ENCODE measurements at regions of chr5 and their contacts with region 1.

Region 1: DNA sequence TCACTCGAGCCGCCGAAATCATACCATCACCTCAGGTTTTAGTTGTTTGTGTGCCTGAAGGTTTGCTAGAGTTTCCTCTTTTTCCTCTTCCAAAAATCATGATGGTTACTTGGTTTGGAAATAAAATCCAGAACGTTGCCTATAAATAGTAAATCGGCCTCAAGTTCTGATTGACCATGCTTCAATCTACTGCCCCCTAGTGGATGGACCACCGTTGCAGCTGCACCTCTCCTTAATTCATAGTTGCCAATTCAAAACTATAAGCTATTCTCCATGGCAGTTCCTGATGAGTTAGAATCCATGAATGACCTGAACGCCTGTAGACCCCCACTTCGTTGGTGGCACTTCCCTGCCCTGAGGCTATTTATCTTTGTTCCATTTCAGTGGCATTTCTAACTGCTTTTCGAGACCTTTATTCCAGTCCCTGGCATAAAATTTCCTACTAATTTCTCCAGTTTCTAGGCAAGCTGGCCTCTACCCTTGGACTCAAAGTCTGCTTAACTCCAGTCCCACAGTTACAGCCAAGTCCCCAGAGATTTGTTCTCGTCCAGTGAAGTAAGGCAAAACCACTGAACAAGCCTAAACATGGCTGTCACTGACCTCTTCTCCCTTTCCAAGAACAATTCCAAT is 422.6 kb downstream of the EFNA5 start:
- DNase-seq: peak in 1 of 2 donors; percentile 74
- H3K4me3 ChIP-seq: no peak overlapping the region
- H3K27ac ChIP-seq: no peak overlapping the region
- H3K4me1 ChIP-seq: peaks cover 2 to 6% of the 10 kb centered on the region in 2 donors
- H3K27me3 ChIP-seq: no peaks in the 10 kb centered on the region
- CTCF ChIP-seq: peak; percentile 30 to 64 (median 63)

Region 2: DNA sequence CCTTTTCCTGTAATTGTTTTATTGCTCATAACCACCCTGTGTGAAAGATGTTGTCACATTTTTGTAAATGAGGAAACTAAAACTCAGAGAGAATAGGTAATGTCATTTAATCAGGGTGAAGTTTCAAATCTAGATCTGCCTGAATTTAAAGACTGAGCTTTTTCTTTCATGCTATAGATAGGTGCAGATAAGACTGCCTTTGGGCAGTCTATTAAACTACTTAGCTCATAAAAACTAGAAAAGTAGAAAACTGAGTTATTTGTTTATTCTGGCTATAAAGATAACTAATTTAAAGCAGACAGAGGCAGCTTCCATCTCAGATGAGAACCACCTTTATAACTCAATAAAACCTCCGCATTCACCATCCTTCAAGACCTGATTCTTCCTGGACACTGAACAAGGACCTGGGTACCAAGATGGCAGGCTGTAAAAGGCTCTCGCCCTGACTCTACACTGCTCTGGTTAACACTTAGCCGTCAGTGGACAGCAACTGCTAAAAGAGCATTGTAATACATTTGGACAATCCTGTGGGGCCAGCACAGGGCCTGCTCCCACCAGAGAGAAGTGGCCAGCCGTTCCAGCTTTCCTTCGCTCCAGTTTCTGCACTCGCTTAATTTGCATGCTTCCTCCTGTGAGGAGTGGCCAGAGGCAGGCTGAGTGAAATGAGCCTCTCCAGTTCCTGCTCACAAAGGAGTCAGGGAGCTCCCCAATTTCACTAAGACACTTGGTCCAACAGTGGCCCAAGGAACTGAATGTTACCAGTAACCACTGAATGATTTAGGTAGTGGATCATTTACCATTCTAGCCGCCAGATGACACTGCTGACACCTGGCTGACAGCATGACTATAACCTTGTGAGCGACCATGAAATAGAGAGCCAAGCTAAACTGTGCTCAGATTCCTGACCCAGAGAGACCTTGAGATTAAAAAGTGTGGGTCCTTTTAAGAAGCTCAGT is 143.9 kb before region 1 on chr5:
- intact Hi-C with region 1: loop called (anchors 10 kb)
- DNase-seq: no peak
- H3K4me3 ChIP-seq: no peak overlapping the region
- H3K27ac ChIP-seq: no peak overlapping the region
- H3K4me1 ChIP-seq: peaks cover 0 to 15% of the 10 kb centered on the region in 2 donors
- H3K27me3 ChIP-seq: no peaks in the 10 kb centered on the region
- CTCF ChIP-seq: peak in 1 of 3 experiments; percentile 11

Measured in ascending aorta (tissue), 2 donors.